ENCODE measurements at regions of chr9 and their contacts with region 1.

Region 1: GRCh38 chr9:5437254-5438216 is at the start of gene PLGRKT:
- DNase-seq: peak; percentile 96
- H3K4me3 ChIP-seq: peak within 1 kb of the TSS; percentile 55 to 61 (median 57)
- H3K27ac ChIP-seq: peak within 1 kb of the TSS; percentile 91 to 97 (median 95)
- H3K4me1 ChIP-seq: peaks cover 6 to 21% (median 13%) of the 10 kb centered on the region in 4 donors
- H3K27me3 ChIP-seq: no peaks in the 10 kb centered on the region
- CTCF ChIP-seq: peak in 4 of 5 experiments; percentile 11 to 38 (median 17)
- EP300 ChIP-seq: no peak
- POLR2A ChIP-seq: peak; percentile 97
- total RNA-seq, gene PLGRKT: 1.6 to 58.3 (median 16.5) TPM

Region 2: GRCh38 chr9:5608298-5609225 is 171.0 kb after region 1 on chr9:
- in situ Hi-C with region 1: loop called in 1 of 4 experiments (anchors 25 kb)
- intact Hi-C with region 1: no loop called
- DNase-seq: no peak
- H3K4me3 ChIP-seq: peak overlapping the region in 3 of 4 donors; percentile 6 to 23 (median 18)
- H3K27ac ChIP-seq: peak overlapping the region in 2 of 4 donors; percentile 23 to 40
- H3K4me1 ChIP-seq: no peaks in the 10 kb centered on the region
- H3K27me3 ChIP-seq: no peaks in the 10 kb centered on the region
- CTCF ChIP-seq: no peak
- EP300 ChIP-seq: no peak
- POLR2A ChIP-seq: no peak

Measured in transverse colon (tissue), 4 donors.